ENCODE measurements at regions of chr10 and their contacts with region 1.

Region 1: GRCh38 chr10:27819781-27820531 is 74.3 kb upstream of the MKX start:
- DNase-seq: peak; percentile 49
- H3K4me3 ChIP-seq: no peak overlapping the region
- H3K27me3 ChIP-seq: no peaks in the 10 kb centered on the region
- CTCF ChIP-seq: no peak

Region 2: DNA sequence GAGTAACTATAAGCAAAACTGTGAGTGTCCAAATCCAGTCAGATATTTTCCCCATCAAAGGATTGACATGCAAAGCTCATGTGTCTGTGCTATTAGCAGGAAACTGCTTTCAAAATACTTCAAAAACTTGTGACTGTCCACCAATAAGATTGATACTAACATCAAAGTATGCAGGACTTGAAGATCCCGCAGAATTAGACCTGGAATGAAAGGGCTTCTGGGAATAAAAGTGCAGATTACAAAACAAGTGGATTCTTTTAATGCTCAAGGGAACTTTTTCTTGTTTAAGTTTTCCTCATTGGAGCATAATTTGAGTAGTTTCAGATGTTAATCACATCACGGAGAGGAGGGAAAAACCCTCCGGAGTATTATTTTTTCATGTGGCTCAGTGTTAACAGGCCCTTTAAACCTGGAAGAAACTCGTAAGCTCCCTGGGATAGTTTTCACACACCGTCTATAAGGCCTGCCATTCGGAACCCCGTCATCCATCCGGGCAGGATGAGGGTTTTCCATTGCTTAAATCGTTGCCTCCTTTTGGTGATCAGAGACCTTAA is 40.4 kb before region 1 on chr10:
- CTCF ChIA-PET with region 1: no interaction called
- POLR2A ChIA-PET with region 1: interaction called, 12 read pairs
- DNase-seq: peak; percentile 13
- H3K4me3 ChIP-seq: no peak overlapping the region
- H3K27me3 ChIP-seq: no peaks in the 10 kb centered on the region
- CTCF ChIP-seq: no peak